Activated B cell treated with CpG ODN at 0.5 μM for 24 hours (primary cell): ENCODE measurements at regions of chr20 and their contacts with region 1.

Region 1: DNA sequence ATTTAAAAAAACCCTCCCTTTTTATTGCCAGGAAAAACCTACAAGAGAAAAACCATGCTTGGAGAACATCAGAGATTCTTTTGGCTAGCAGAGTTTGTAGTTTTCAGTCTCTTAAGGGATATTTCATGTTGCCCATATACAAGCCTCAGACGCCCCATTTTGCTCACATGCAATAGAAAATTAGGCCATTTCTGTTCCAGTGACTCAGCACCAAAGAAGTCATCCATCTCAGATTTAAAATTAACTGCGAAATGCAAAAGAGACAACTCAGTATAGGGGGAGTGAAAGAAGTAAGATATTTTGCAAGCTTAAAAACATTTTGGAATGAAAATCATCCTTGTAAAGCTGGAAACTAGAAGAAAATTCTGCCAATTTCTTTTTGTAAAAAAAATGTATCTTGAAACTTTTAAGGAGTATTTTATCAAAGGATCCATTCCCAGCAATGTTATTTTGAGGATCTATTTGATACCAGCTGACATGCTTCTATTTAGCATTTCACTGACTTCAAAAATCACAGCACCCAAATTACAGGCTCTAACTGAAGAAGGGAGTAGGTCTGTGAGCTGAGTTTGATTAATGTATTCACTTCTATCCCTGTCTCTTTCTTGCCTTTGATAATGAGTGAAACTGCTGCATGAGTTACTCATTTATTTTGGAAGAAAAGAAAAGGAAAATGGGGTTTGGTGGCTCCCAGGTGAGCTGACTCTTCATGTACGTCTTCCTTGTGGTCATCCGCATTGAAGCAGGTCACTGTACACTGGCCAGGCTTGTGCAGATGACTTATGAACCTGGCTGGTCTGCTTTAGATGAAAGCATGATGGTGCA is 223.7 kb upstream of the SULF2 start:
- DNase-seq: no peak
- ATAC-seq: no peak
- H3K4me3 Mint-ChIP-seq: no peak overlapping the region
- H3K27ac Mint-ChIP-seq: no peak overlapping the region
- H3K4me1 Mint-ChIP-seq: peaks cover 40% of the 10 kb centered on the region
- H3K27me3 Mint-ChIP-seq: no peaks in the 10 kb centered on the region
- CTCF ChIP-seq: no peak

Region 2: GRCh38 chr20:47521059-47521808 is 487.8 kb before region 1 on chr20:
- CTCF ChIA-PET with region 1: no interaction called
- POLR2A ChIA-PET with region 1: no interaction called
- intact Hi-C with region 1: no loop called
- DNase-seq: no peak
- ATAC-seq: no peak
- H3K4me3 Mint-ChIP-seq: no peak overlapping the region
- H3K27ac Mint-ChIP-seq: peak overlapping the region; percentile 75
- H3K4me1 Mint-ChIP-seq: peaks cover 60% of the 10 kb centered on the region
- H3K27me3 Mint-ChIP-seq: no peaks in the 10 kb centered on the region
- CTCF ChIP-seq: no peak

Region 3: DNA sequence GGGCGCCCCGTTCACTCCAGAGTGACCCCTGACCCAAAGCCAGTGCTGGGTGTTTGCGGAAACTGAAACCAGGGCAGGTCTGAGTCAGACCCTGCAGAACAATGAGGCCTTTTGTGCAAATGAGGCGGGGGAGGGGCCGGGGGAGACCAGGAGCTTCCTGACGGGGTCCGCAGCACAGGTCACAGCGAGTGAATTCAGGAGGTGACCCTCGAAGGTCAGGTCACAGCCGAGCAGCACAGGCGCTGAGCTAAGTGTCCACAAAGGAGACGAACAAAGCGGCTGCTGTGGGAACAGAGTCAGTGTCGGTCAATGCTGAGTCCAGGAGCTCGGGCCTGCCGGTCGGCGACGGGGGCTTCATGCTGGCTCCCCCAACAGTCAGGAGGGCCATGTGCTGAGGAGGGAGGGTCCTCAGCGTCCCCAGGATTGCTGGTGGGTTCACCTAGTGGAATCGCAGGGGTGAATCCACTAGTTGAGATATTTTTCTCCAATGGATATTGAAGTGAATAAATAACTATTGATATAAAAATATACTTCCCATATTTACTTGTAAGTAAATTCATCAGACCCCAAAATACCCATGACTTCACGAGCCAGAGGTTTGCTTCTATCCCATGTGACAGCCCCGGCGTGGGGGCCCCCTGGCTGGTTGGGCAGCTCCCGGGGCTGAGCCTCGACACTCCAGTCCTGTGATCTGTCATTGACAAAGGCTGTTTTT is 35.3 kb before region 1 on chr20:
- CTCF ChIA-PET with region 1: no interaction called
- POLR2A ChIA-PET with region 1: no interaction called
- intact Hi-C with region 1: loop called (anchors 5 kb)
- DNase-seq: no peak
- ATAC-seq: no peak
- H3K4me3 Mint-ChIP-seq: no peak overlapping the region
- H3K27ac Mint-ChIP-seq: no peak overlapping the region
- H3K4me1 Mint-ChIP-seq: peaks cover 36% of the 10 kb centered on the region
- H3K27me3 Mint-ChIP-seq: no peaks in the 10 kb centered on the region
- CTCF ChIP-seq: no peak